GM12878 (cell line): ENCODE measurements at regions of chr17 and their contacts with region 1.

Region 1: GRCh38 chr17:54992797-54993639 is 24.5 kb downstream of the STXBP4 start:
- DNase-seq: no peak
- ATAC-seq: peak; percentile 79
- H3K4me3 ChIP-seq: no peak overlapping the region
- H3K27ac ChIP-seq: no peak overlapping the region
- H3K4me1 ChIP-seq: no peaks in the 10 kb centered on the region
- H3K27me3 ChIP-seq: no peaks in the 10 kb centered on the region
- CTCF ChIP-seq: peak; percentile 50 to 66 (median 51); a peak in 5 of 6 replicates
- EP300 ChIP-seq: no peak
- POLR2A ChIP-seq: no peak
- RAD21 ChIP-seq: peak; percentile 86

Region 2: DNA sequence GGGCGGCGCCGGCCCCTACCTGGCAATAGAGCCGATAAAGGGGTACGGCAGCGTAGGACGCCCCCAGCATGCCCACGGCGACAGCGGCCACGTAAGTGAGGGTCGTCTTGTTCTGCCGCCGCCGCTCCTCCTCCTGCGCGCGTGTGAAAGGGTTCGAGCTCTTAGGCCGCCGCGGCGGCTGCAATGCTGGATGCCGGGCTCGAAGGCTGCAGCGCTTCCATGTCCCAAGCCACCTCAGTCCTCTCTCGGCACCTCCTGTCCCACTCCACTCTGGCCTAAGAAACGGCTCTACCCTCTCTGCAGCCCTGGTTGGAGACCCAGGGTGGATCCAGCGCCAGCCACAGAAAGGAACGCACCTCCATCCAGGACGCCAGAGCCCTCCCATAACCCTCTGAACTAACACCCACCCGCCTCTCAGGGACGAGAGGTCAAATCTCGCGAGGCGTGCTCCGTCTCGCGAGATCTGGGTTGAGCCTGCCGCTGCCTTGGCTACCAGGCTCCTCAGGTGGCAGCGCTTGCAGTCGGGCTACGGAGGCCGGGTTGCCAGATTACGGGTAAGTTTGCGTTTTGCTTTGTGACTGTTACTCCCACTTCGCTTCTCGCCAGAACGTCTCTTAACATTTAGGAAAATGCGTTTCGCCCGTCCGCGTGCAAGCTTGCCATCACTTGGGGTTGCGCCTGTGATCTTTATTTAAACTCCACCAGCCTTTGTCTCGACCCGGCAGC is 24.6 kb before region 1 on chr17 and contains the starts of genes COX11 and STXBP4:
- CTCF ChIA-PET with region 1: interaction called, 28 read pairs
- POLR2A ChIA-PET with region 1: no interaction called
- RAD21 ChIA-PET with region 1: no interaction called
- SMC1A ChIA-PET with region 1: interaction called, 17 read pairs
- in situ Hi-C with region 1: no loop called
- intact Hi-C with region 1: no loop called
- DNase-seq: peak; percentile 95
- ATAC-seq: peak; percentile 94
- H3K4me3 ChIP-seq: peak within 1 kb of the TSS; percentile 89
- H3K27ac ChIP-seq: peak within 1 kb of the TSS; percentile 85
- H3K4me1 ChIP-seq: peaks cover 8% of the 10 kb centered on the region; the same call in 1 of the 2 replicates
- H3K27me3 ChIP-seq: no peaks in the 10 kb centered on the region
- CTCF ChIP-seq: peak in 1 of 3 experiments; percentile 47; a peak in 3 of 6 replicates
- EP300 ChIP-seq: no peak
- POLR2A ChIP-seq: peak; percentile 94
- RAD21 ChIP-seq: no peak
- polyA plus RNA-seq, gene COX11: 13.8 to 21.5 TPM
- polyA plus RNA-seq, gene STXBP4: 4.8 to 5.5 TPM

Region 3: DNA sequence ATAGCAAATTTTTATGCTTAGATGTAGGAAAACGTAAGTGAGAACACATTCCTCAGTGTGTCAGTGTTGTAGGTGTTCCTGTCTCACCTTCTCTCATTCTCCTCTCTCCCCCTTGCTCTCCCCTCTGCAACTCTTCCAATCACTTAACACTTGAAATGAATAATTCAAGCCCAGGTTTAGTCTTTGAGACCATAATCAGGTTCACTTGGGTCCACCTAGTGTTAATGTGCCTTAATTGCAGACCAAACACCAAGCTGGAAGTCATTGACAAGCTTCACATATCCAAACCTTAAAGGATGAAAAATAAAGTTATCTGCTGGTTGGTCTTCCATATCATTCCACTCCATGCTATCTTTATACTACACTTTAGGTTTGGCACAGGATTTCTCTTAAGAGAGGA is 12.5 kb after region 1 on chr17:
- CTCF ChIA-PET with region 1: interaction called, 63 read pairs
- POLR2A ChIA-PET with region 1: no interaction called
- RAD21 ChIA-PET with region 1: interaction called, 11 read pairs
- SMC1A ChIA-PET with region 1: interaction called, 16 read pairs
- in situ Hi-C with region 1: no loop called
- intact Hi-C with region 1: no loop called
- DNase-seq: no peak
- ATAC-seq: peak; percentile 80
- H3K4me3 ChIP-seq: no peak overlapping the region
- H3K27ac ChIP-seq: no peak overlapping the region
- H3K4me1 ChIP-seq: no peaks in the 10 kb centered on the region
- H3K27me3 ChIP-seq: no peaks in the 10 kb centered on the region
- CTCF ChIP-seq: peak; percentile 47 to 58 (median 53)
- EP300 ChIP-seq: no peak
- POLR2A ChIP-seq: no peak
- RAD21 ChIP-seq: 0 out of 2 replicates have a peak, but pooled peaks have one; percentile 21

Region 4: GRCh38 chr17:55295411-55296170 is 302.6 kb after region 1 on chr17:
- CTCF ChIA-PET with region 1: interaction called, 72 read pairs
- POLR2A ChIA-PET with region 1: no interaction called
- RAD21 ChIA-PET with region 1: interaction called, 19 read pairs
- SMC1A ChIA-PET with region 1: interaction called, 34 read pairs
- in situ Hi-C with region 1: loop called (anchors 5 kb)
- intact Hi-C with region 1: loop called (anchors 1 kb)
- DNase-seq: no peak
- ATAC-seq: peak; percentile 90
- H3K4me3 ChIP-seq: no peak overlapping the region
- H3K27ac ChIP-seq: no peak overlapping the region
- H3K4me1 ChIP-seq: no peaks in the 10 kb centered on the region
- H3K27me3 ChIP-seq: peaks cover 0 to 1% of the 10 kb centered on the region in 2 experiments; a peak in 2 of 4 replicates
- CTCF ChIP-seq: peak; percentile 79 to 87 (median 85)
- EP300 ChIP-seq: no peak
- POLR2A ChIP-seq: no peak
- RAD21 ChIP-seq: peak; percentile 89

Region 5: GRCh38 chr17:55356434-55357328 is 363.7 kb after region 1 on chr17:
- CTCF ChIA-PET with region 1: interaction called, 95 read pairs
- POLR2A ChIA-PET with region 1: no interaction called
- RAD21 ChIA-PET with region 1: interaction called, 8 read pairs
- SMC1A ChIA-PET with region 1: interaction called, 9 read pairs
- in situ Hi-C with region 1: loop called (anchors 5 kb)
- intact Hi-C with region 1: no loop called
- DNase-seq: peak; percentile 28
- ATAC-seq: peak; percentile 100
- H3K4me3 ChIP-seq: no peak overlapping the region
- H3K27ac ChIP-seq: no peak overlapping the region
- H3K4me1 ChIP-seq: no peaks in the 10 kb centered on the region
- H3K27me3 ChIP-seq: no peaks in the 10 kb centered on the region; a peak in 1 of 4 replicates
- CTCF ChIP-seq: peak; percentile 74 to 87 (median 84)
- EP300 ChIP-seq: no peak
- POLR2A ChIP-seq: no peak
- RAD21 ChIP-seq: peak; percentile 71

Region 6: GRCh38 chr17:55513885-55514591 is 521.0 kb after region 1 on chr17:
- CTCF ChIA-PET with region 1: interaction called, 9 read pairs
- POLR2A ChIA-PET with region 1: no interaction called
- RAD21 ChIA-PET with region 1: interaction called, 5 read pairs
- SMC1A ChIA-PET with region 1: interaction called, 5 read pairs
- in situ Hi-C with region 1: loop called (anchors 10 kb)
- intact Hi-C with region 1: loop called (anchors 2 kb)
- DNase-seq: peak; percentile 59
- ATAC-seq: peak; percentile 91
- H3K4me3 ChIP-seq: no peak overlapping the region
- H3K27ac ChIP-seq: no peak overlapping the region
- H3K4me1 ChIP-seq: no peaks in the 10 kb centered on the region
- H3K27me3 ChIP-seq: no peaks in the 10 kb centered on the region
- CTCF ChIP-seq: peak; percentile 82 to 91 (median 90)
- EP300 ChIP-seq: no peak
- POLR2A ChIP-seq: no peak
- RAD21 ChIP-seq: peak; percentile 99